ENCODE measurements at regions of chr4 and their contacts with region 1.

Region 1: DNA sequence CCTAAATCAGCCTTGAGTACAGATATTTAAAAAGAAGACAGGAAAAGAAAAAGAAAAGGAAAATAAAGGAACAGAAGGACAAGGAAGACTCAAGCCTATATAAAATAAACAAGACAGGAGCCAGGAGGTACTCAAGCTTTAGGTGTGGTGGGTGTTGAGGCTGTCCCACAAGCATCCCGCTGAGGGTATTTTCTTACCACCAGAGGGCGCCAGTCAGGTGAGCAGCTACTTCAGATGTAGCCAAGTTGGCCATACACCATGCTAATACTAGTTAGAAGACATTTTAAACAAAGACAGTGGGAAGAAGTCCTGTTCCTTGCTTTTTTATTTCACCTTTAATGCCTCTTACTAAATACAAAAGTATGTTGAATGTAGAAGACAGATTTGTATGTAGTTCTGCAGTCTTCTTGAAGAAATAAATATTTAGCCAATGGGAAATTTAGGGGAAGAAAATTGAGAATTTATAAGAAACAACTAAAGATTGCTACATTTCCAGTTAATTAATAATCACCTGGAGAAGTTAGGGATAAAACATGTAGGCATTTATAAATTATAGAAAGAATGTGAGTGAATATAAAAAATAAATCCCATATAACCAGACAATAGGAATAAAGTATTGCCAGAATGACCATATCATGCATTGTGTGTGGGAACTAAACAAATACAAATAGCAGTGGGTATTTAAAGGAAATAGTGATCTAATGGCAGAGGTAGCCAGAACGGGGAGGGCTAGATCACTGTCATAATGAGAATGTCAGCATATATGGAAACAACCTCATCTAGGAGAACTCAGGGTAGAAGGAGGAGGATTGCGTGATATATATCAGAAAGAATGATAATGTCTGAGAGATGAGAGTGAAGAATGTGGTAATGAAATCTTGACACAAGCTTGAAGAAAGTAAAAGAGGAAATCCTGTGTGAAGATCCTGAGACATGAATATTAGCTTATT is 71.0 kb downstream of the MTHFD2L start:
- DNase-seq: peak; percentile 68
- H3K4me3 ChIP-seq: no peak overlapping the region
- H3K27ac ChIP-seq: no peak overlapping the region
- H3K4me1 ChIP-seq: peaks cover 15% of the 10 kb centered on the region
- H3K27me3 ChIP-seq: no peaks in the 10 kb centered on the region
- CTCF ChIP-seq: peak; percentile 84 to 88

Region 2: GRCh38 chr4:74032064-74032463 is 196.9 kb before region 1 on chr4:
- CTCF ChIA-PET with region 1: no interaction called
- dilution Hi-C with region 1: no loop called
- in situ Hi-C with region 1: no loop called
- intact Hi-C with region 1: no loop called
- DNase-seq: no peak
- H3K4me3 ChIP-seq: no peak overlapping the region
- H3K27ac ChIP-seq: no peak overlapping the region
- H3K4me1 ChIP-seq: peaks cover 27% of the 10 kb centered on the region
- H3K27me3 ChIP-seq: no peaks in the 10 kb centered on the region
- CTCF ChIP-seq: no peak

Region 3: GRCh38 chr4:74098450-74098994 is 130.4 kb before region 1 on chr4:
- CTCF ChIA-PET with region 1: no interaction called
- dilution Hi-C with region 1: no loop called
- in situ Hi-C with region 1: no loop called
- intact Hi-C with region 1: no loop called
- DNase-seq: no peak
- H3K4me3 ChIP-seq: peak overlapping the region; percentile 71 to 88 (median 85)
- H3K27ac ChIP-seq: peak overlapping the region; percentile 94
- H3K4me1 ChIP-seq: peaks cover 17% of the 10 kb centered on the region
- H3K27me3 ChIP-seq: no peaks in the 10 kb centered on the region
- CTCF ChIP-seq: no peak

Region 4: DNA sequence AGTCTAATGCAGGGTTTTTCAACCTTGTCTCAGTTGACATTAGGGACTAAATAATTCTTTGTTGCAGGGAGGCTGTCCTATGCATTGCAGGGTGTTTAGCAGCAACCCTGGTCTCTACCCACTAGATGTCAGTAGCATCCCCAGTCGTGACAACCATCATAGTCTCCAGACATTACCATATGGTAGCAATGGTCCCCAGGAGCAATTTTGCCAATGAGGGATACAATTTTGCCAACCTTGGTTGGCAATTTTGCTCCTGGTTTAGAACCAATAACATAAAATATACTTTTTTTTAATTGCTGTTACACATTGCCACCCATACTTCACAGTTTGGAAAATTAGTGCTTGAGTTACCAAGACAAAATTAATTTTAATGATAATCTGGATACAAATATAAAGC is 141.9 kb after region 1 on chr4:
- CTCF ChIA-PET with region 1: interaction called, 3 read pairs
- dilution Hi-C with region 1: no loop called
- in situ Hi-C with region 1: no loop called
- intact Hi-C with region 1: loop called (anchors 5 kb)
- DNase-seq: peak; percentile 58
- H3K4me3 ChIP-seq: no peak overlapping the region
- H3K27ac ChIP-seq: peak overlapping the region; percentile 57
- H3K4me1 ChIP-seq: peaks cover 37% of the 10 kb centered on the region
- H3K27me3 ChIP-seq: no peaks in the 10 kb centered on the region
- CTCF ChIP-seq: peak; percentile 90 to 96

Measured in mammary epithelial cell (primary cell).